Thyroid gland (tissue), 4 donors: ENCODE measurements at regions of chr17 and their contacts with region 1.

Region 1: DNA sequence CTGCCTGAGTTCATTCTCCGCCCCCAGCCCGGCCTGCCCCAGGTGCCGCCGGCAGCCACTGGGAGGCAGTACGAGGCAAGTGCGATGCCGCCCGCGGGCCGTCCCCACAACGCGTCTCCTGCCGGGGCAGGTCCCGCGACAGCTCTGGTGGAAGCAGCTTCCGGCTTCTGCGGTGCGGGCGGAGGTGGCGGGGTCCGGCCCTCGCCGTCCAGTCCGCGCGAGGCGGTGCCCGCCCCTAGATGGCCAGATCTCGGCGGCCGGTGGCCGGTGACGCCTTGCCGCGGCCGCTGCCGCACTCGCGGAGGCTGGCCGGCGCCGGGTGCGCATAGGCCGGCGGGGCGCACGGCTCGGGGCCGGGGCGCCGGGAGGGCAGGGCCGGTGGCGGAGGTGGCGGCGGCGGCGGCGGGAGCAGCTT is 1.8 kb downstream of the GJD3 start:
- DNase-seq: peak; percentile 85 to 88
- H3K4me3 ChIP-seq: peak overlapping the region in 2 of 3 donors; percentile 21 to 50
- H3K27ac ChIP-seq: peak overlapping the region in 1 of 3 donors; percentile 30
- H3K4me1 ChIP-seq: peaks cover 3 to 12% of the 10 kb centered on the region in 2 donors
- H3K27me3 ChIP-seq: no peaks in the 10 kb centered on the region
- CTCF ChIP-seq: peak; percentile 32 to 77 (median 58)
- POLR2A ChIP-seq: peak in 1 of 2 donors; percentile 57

Region 2: DNA sequence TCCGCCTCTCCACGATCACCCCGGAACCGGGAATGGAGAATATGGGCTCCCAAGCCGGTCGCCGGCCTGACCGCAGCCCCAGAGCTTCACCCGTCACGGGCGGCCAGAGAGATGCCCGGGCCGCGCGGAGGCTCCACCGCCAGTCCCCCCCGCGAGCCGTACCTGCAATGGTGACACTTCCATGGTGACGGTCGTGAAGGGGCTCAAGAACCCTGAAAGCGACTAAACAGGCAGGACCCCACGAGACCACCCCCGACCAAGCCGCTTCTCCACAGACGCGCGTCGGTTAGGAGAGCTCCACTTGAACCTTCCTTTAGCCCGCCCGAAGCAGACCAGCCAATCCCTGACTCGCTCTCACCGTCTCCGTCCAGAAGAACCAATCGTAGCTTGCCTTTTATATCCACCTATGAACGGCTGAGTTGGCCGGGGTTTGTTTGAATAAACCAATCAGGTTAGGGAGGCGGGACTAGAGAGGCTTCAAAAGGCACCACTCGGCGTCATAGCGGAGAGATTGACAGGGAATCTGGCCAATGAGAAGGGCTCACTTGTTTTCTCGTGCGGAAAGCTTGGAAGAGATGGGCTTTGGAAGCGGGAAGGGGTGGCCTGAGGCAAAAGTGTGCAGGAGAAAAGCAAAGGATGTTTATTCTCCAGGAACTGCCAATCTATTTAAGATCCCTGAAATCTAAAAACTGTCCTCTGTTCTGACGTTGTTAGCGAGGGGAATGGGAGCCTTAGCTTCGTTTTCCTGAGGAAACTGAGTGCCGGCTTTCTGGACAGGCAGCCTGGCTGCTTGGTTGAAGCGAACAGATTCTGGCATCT is 55.1 kb after region 1 on chr17 and contains the start of gene TOP2A:
- intact Hi-C with region 1: loop called (anchors 5 kb)
- DNase-seq: peak; percentile 96 to 97
- H3K4me3 ChIP-seq: peak within 1 kb of the TSS in 2 of 3 donors; percentile 35 to 46
- H3K27ac ChIP-seq: peak within 1 kb of the TSS in 1 of 3 donors; percentile 51
- H3K4me1 ChIP-seq: peaks cover 5 to 10% of the 10 kb centered on the region in 2 donors
- H3K27me3 ChIP-seq: no peaks in the 10 kb centered on the region
- CTCF ChIP-seq: no peak
- POLR2A ChIP-seq: no peak
- total RNA-seq, gene TOP2A: 0.20 to 5.2 (median 2.2) TPM

Region 3: DNA sequence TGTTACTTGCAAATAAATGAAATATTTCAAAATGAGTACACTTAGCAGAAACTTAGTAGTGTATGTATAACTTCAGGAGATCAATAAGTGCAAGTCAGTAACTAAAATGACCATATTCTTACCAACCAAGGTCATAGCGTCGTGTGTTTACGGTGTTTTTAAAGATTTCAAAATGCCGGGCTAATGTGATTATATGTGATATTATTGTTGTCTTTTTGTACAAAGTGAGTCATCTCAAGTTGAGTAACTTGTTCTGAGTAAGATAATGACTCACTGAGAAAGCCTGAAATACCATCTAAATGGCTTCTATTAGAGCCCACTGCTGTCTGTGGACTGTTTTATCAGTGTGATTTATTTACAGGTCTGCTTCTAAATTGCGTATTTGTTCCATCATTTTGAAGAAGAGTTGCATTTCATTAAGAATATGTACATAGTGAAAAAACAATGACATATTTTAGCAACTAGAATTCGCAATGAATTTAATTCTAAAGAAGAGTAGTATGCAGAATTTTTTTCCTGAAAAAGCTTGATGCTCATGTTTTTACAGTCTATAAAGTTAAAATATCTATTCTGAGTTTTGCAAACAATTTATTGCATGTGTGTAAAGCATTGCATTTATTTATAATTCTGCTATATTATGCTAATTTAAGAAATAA is 491.6 kb after region 1 on chr17:
- intact Hi-C with region 1: no loop called
- DNase-seq: no peak
- H3K4me3 ChIP-seq: no peak overlapping the region
- H3K27ac ChIP-seq: no peak overlapping the region
- H3K4me1 ChIP-seq: no peaks in the 10 kb centered on the region
- H3K27me3 ChIP-seq: no peaks in the 10 kb centered on the region
- CTCF ChIP-seq: no peak
- POLR2A ChIP-seq: no peak